AG04449 (cell line): ENCODE measurements at regions of chr1 and their contacts with region 1.

Region 1: DNA sequence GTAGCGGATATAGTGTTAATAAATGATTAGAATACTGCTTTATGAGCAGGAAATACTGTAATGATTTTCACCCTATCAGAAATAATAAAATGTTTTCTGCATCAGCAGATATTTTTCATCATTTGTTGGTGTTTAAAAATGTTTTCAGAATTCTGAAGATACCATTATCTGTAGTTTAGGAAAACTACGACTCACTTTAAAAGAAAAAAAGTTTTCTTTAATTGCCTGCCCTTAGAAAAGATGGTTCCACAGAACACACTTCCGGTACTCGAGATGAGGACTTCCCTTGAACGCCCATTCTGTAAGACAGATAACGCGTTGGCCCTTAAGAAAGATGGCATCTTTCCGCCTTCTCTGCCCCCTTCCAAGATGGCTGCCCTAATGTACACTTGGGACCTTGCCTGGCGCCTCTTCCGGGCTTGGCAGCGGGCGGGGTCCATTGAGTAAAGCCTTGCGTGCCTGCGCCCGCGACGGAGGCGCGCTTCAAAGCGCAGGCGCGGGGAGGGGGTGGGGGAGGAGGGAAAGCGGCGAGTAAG is at the start of gene SZRD1:
- DNase-seq: peak; percentile 98
- H3K4me3 ChIP-seq: peak within 1 kb of the TSS; percentile 87
- CTCF ChIP-seq: no peak

Region 2: GRCh38 chr1:16073490-16074119 is 293.2 kb before region 1 on chr1 and contains the start of gene FAM131C:
- CTCF ChIA-PET with region 1: interaction called, 96 read pairs
- POLR2A ChIA-PET with region 1: no interaction called
- DNase-seq: no peak
- H3K4me3 ChIP-seq: peak within 1 kb of the TSS; percentile 52
- CTCF ChIP-seq: peak; percentile 27

Region 3: GRCh38 chr1:16187748-16188401 is 178.9 kb before region 1 on chr1:
- CTCF ChIA-PET with region 1: interaction called, 31 read pairs
- POLR2A ChIA-PET with region 1: no interaction called
- DNase-seq: no peak
- H3K4me3 ChIP-seq: no peak overlapping the region
- CTCF ChIP-seq: peak; percentile 97

Region 4: DNA sequence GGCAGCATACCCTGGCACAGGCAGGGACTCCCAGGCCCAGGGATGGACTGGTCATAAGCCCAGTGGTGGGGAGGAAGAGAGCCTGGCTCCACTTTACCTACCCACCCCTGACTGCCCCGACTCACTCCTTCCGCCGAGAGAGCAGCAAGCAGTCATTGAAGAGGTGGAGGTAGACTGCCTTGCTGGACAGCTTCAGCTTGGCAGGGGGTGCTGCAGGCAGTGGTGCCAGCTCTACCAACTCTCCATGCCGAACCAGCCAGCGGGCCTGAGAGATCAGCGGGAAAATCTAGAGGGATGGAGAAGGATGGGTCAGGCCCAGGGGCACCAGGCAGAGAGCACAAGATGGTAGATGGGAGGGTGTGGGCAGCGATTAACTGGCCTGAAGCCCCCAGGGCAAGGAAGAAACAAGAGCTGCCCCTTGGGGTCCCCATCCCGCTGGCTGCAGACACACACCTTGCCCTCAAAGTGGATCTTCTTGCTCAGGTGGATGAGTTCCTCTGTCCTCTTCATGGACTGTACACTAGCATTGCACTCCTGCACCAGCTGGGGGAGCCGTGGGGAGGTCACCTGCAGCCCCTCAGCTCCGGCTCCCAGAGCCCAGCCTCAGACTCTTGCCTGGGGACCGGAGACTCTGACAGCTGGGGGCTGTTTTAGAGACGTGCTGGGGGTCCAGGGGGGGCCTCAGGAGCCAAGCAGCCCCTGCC is 162.0 kb before region 1 on chr1:
- CTCF ChIA-PET with region 1: interaction called, 18 read pairs
- POLR2A ChIA-PET with region 1: no interaction called
- DNase-seq: no peak
- H3K4me3 ChIP-seq: no peak overlapping the region
- CTCF ChIP-seq: peak; percentile 40

Region 5: GRCh38 chr1:16236511-16237342 is 130.1 kb before region 1 on chr1 and contains the start of gene CPLANE2:
- CTCF ChIA-PET with region 1: interaction called, 12 read pairs
- POLR2A ChIA-PET with region 1: no interaction called
- DNase-seq: no peak
- H3K4me3 ChIP-seq: peak within 1 kb of the TSS; percentile 75
- CTCF ChIP-seq: no peak

Region 6: GRCh38 chr1:16243936-16244649 is 122.7 kb before region 1 on chr1:
- CTCF ChIA-PET with region 1: interaction called, 50 read pairs
- POLR2A ChIA-PET with region 1: no interaction called
- DNase-seq: peak; percentile 36
- H3K4me3 ChIP-seq: no peak overlapping the region
- CTCF ChIP-seq: peak; percentile 80

Region 7: DNA sequence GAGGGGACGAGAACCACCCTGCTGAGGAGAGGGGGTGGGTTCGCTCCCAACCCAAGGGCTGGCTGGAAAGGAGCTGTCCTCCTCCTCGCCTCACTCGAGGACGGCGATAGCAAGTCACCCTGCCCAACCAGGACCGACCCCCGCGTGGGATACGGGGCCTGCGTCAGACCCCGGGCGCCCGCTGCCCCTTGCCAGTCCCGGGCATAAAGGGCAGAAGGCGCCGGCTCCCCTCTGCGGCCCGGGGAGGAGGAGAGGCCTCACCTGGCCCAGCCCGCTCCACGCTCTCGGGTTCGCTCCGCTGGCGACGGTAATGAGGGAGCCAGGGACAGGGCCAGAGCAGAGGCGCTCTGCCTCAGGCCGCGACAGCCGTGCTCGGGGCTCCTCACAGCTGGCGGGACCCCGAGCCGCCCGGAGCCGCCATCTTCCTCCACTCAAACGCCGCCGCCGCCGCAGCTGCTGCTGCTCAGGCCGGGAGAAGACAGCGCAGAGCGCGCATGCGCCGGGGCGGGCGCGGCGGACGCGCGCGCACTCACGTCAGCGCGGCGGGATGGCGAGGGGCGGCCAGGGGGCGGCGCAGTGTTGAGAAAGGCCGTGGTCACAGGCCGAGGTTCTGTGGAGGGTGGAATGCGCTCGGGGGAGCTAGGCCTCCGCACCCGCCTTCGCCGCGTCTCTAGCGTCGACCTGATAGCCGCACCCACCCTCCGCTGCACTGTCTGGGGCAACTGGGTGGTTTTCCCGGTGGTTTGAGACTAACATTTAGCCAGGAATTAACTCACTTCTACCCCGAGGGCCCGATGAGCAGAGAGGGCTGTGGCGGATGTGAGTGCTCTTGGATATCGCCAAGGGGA is 14.6 kb before region 1 on chr1 and contains the start of gene FBXO42:
- CTCF ChIA-PET with region 1: interaction called, 119 read pairs
- POLR2A ChIA-PET with region 1: interaction called, 6 read pairs
- DNase-seq: no peak
- H3K4me3 ChIP-seq: peak within 1 kb of the TSS; percentile 80
- CTCF ChIP-seq: peak; percentile 74